ENCODE measurements at regions of chr5 and their contacts with region 1.

Region 1: DNA sequence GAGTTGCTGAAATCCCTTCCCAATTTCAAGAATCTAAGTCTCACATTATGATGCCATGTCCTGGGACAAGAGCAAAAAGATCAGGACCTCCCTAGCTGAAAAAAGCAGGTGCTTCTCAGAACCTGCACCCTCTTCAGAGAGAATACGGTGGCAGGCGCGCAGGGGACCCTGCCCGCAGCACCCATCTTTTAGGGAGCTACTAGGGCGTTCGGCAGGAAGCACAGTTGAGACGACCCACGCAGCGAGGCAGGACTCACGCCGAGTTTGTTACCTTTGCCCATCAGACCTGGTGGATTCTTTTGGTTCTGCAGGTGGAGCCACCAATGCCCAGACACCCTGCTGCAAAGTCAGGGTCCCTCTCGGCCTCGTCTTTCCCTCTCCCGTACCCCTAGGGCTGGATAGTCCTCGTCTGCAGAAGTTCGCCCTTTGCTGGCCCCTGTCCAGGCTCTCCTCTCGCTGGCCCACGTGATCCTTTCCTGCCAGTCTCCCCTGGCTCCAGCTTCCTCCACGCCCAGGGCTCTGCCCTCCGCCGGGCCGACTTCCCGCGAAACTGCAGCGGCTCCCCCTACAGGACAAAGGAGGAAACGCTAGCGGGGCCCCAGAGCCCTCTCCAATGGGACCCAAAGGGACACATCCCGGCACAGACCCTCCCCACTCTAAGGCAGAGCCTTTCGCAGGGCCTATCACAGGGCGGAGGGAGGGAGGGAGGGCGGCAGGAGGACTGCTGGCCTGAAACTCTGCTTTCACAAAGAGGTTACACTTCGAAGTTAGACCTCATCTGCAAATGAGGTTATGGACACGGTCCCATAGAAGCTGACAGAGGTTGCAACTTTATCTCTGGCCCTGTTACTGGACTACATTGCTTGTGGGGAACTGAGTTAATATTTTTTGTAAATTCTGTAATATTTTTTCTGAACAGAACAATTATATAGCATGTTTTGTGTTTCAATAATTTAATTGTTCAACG is 28.8 kb downstream of the TMEM174 start:
- DNase-seq: peak; percentile 44
- H3K4me3 Mint-ChIP-seq: no peak overlapping the region
- H3K27ac Mint-ChIP-seq: no peak overlapping the region
- H3K4me1 Mint-ChIP-seq: no peaks in the 10 kb centered on the region
- H3K27me3 Mint-ChIP-seq: peaks cover 39% of the 10 kb centered on the region

Region 2: DNA sequence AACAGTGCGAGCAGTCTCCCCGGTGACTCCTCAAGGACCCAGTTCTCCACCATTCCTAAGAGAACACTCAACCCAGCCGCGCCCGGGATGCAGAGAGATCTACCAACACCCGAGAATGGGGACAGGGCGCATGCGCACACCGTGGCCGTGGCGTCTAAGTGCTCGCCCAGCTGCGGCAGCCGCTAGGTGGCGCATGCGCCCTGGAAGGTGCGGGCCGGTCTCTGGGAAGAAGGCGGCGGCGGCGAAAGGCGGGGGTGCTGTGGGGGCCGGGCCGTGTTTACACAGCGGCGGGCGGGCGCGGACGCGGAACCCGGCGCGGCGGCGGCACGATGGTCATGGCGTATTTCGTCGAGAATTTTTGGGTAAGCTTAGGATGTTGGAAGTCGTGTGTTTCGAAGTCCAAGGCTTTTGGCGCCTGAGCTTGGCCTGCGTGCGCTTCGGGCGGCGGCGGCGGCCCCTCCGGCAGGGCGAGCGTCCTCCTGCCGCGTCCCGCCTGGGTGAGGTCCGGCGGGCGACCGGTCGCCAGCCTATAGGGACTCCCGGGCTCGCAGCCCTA is 246.0 kb before region 1 on chr5 and contains the start of gene FCHO2:
- intact Hi-C with region 1: loop called (anchors 5 kb)
- DNase-seq: peak; percentile 90
- H3K4me3 Mint-ChIP-seq: peak within 1 kb of the TSS; percentile 86
- H3K27ac Mint-ChIP-seq: peak within 1 kb of the TSS; percentile 45
- H3K4me1 Mint-ChIP-seq: peaks cover 15% of the 10 kb centered on the region
- H3K27me3 Mint-ChIP-seq: peaks cover 56% of the 10 kb centered on the region
- total RNA-seq, gene FCHO2: 1.3 and 1.6 TPM in 2 replicates

Region 3: GRCh38 chr5:73088026-73088425 is 113.8 kb before region 1 on chr5:
- intact Hi-C with region 1: loop called (anchors 1 kb)
- DNase-seq: no peak
- H3K4me3 Mint-ChIP-seq: no peak overlapping the region
- H3K27ac Mint-ChIP-seq: no peak overlapping the region
- H3K4me1 Mint-ChIP-seq: no peaks in the 10 kb centered on the region
- H3K27me3 Mint-ChIP-seq: peaks cover 19% of the 10 kb centered on the region

Region 4: DNA sequence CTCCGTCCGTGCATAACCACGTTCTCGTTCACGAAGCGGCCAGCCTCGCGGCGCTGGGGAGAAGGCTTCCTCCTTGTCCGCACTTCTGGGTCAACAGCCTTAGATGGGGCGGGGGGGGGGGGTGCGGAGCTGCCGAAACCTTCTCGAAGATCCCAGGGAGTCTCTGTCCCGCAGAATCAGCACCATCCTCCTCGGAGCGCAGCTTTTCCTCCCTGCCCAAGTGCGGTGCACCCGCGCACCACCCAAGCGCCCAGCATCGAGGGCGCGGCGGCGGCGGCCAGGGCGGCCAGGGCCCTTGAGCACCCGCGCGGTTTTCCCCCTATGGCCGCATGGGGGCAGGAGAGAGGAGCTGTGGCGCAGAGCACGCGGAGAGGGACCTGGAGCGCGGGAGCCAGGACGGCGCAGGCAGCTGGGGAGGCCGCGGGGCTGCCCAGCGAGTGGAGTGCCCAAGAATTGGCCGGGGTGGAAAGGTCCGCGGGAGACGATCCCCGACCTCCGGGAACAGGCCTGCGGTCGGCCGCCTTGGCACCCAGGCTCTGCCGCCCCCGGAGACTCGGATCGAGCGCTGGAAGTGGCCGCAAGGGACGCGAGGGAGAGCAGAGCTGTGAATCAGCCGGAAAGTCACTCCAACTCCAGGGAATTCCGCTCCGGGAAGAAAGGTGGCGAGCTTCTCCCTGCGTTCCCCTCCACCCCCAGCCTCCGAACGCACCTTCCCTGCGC is 14.2 kb after region 1 on chr5:
- intact Hi-C with region 1: no loop called
- DNase-seq: peak; percentile 28
- H3K4me3 Mint-ChIP-seq: no peak overlapping the region
- H3K27ac Mint-ChIP-seq: no peak overlapping the region
- H3K4me1 Mint-ChIP-seq: peaks cover 3% of the 10 kb centered on the region
- H3K27me3 Mint-ChIP-seq: peaks cover 74% of the 10 kb centered on the region

Measured in activated T-helper 2 cell treated with anti-CD3 and anti-CD28 coated beads, Interferon-gamma antibody, Interleukin-2, Interleukin-4, amounts not matched to agents 10 μg/mL and 5 μg/mL and 100 μg/mL, durations not matched to agents 14 hours and 24 hours and 36 hours (primary cell).